Common myeloid progenitor, CD34-positive (primary cell): ENCODE measurements at regions of chr6 and their contacts with region 1.

Region 1: GRCh38 chr6:106451439-106451838 is 90.9 kb downstream of the CRYBG1 start:
- DNase-seq: no peak
- H3K4me3 ChIP-seq: no peak overlapping the region
- H3K27ac ChIP-seq: no peak overlapping the region
- H3K4me1 ChIP-seq: peaks cover 17 to 50% (median 29%) of the 10 kb centered on the region in 4 experiments
- H3K27me3 ChIP-seq: no peaks in the 10 kb centered on the region

Region 2: DNA sequence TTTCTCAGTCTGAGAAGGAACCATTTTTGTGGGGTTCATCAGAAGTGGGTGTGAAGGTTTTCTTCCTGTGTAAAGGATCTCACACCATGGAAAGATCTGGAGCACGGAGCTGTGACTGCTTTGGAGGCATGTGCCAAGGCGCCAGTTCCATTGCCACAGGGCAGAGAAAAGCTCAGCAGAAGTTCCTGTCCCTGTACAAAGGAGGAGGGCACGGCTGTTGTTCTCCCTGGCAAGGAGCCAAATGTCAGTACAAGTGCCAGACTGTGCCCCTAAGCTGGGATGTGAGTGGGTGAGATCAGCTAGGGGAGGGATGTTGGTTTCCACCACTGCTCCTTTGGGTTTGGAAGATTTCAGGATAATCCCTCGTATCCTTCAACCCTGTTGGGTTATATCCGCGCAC is 26.4 kb after region 1 on chr6:
- CTCF ChIA-PET with region 1: interaction called, 11 read pairs
- POLR2A ChIA-PET with region 1: no interaction called
- DNase-seq: peak; percentile 21 to 67 (median 64)
- H3K4me3 ChIP-seq: peak overlapping the region in 1 of 7 experiments; percentile 37
- H3K27ac ChIP-seq: peak overlapping the region in 1 of 2 experiments; percentile 50
- H3K4me1 ChIP-seq: peaks cover 17 to 32% (median 24%) of the 10 kb centered on the region in 4 experiments
- H3K27me3 ChIP-seq: no peaks in the 10 kb centered on the region

Region 3: GRCh38 chr6:106501960-106502371 is 50.5 kb after region 1 on chr6:
- CTCF ChIA-PET with region 1: no interaction called
- POLR2A ChIA-PET with region 1: no interaction called
- DNase-seq: no peak
- H3K4me3 ChIP-seq: no peak overlapping the region
- H3K27ac ChIP-seq: no peak overlapping the region
- H3K4me1 ChIP-seq: peaks cover 0 to 16% (median 0%) of the 10 kb centered on the region in 4 experiments
- H3K27me3 ChIP-seq: no peaks in the 10 kb centered on the region